ENCODE measurements at regions of chr1 and their contacts with region 1.

Region 1: GRCh38 chr1:178143730-178144690 is 50.1 kb downstream of the RASAL2 start:
- DNase-seq: no peak
- ATAC-seq: no peak
- H3K4me3 ChIP-seq: no peak overlapping the region
- H3K27ac ChIP-seq: no peak overlapping the region
- H3K4me1 ChIP-seq: no peaks in the 10 kb centered on the region; the same call in 1 of the 2 replicates
- H3K27me3 ChIP-seq: no peaks in the 10 kb centered on the region
- CTCF ChIP-seq: no peak

Region 2: GRCh38 chr1:178109348-178110143 is 34.5 kb before region 1 on chr1:
- CTCF ChIA-PET with region 1: no interaction called
- POLR2A ChIA-PET with region 1: interaction called, 10 read pairs
- in situ Hi-C with region 1: no loop called
- intact Hi-C with region 1: no loop called
- DNase-seq: no peak
- ATAC-seq: no peak
- H3K4me3 ChIP-seq: no peak overlapping the region
- H3K27ac ChIP-seq: no peak overlapping the region
- H3K4me1 ChIP-seq: no peaks in the 10 kb centered on the region
- H3K27me3 ChIP-seq: no peaks in the 10 kb centered on the region
- CTCF ChIP-seq: no peak

Region 3: DNA sequence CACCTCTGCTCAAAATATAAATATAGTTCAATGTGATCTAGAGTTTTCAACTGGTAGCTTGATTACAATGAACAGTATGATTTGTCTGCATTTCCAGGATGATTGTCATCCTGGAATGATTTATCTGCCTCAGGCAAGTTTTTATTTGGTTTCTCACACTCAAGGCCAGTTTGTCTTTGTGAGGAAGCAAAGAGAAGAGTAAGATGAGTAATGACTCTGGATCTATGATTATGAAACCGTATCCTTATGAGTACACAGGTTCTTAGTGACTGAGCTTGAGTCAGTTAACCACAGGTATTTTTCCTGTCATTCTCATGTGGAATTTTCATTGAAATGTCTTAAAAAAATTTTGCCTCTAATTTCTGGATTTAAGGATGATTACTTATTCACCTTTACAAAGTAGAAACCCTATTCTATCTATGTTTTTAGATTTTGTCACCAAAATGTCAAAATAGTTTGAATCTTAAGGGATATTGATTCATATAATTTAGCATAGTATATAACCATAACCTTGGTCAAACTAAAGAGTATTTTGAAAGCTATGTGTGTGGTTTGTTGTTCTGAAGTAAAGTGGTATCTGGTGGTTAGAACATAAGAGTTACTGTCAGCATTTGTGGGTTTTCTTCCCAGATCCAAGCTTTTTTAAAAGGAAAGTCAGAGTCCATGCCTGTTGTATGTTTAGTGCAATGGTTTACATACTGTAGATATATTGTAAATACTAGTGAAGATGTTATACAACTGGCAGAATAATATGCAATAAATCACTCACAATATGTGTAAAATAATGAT is 94.9 kb after region 1 on chr1:
- CTCF ChIA-PET with region 1: no interaction called
- POLR2A ChIA-PET with region 1: no interaction called
- in situ Hi-C with region 1: no loop called
- intact Hi-C with region 1: no loop called
- DNase-seq: peak; percentile 96
- ATAC-seq: peak; percentile 99
- H3K4me3 ChIP-seq: no peak overlapping the region
- H3K27ac ChIP-seq: peak overlapping the region; percentile 97
- H3K4me1 ChIP-seq: peaks cover 51% of the 10 kb centered on the region
- H3K27me3 ChIP-seq: no peaks in the 10 kb centered on the region
- CTCF ChIP-seq: no peak

Region 4: GRCh38 chr1:178379807-178380206 is 235.8 kb after region 1 on chr1:
- CTCF ChIA-PET with region 1: no interaction called
- POLR2A ChIA-PET with region 1: no interaction called
- in situ Hi-C with region 1: no loop called
- intact Hi-C with region 1: no loop called
- DNase-seq: no peak
- ATAC-seq: no peak
- H3K4me3 ChIP-seq: no peak overlapping the region
- H3K27ac ChIP-seq: no peak overlapping the region
- H3K4me1 ChIP-seq: no peaks in the 10 kb centered on the region
- H3K27me3 ChIP-seq: no peaks in the 10 kb centered on the region
- CTCF ChIP-seq: peak; percentile 52

Measured in Panc1 (cell line).